HEK293 (cell line): ENCODE measurements at regions of chr17 and their contacts with region 1.

Region 1: GRCh38 chr17:52106638-52107261 is 51.8 kb downstream of the CA10 start:
- H3K4me3 ChIP-seq: no peak overlapping the region
- H3K27ac ChIP-seq: no peak overlapping the region
- H3K4me1 ChIP-seq: no peaks in the 10 kb centered on the region
- CTCF ChIP-seq: no peak

Region 2: DNA sequence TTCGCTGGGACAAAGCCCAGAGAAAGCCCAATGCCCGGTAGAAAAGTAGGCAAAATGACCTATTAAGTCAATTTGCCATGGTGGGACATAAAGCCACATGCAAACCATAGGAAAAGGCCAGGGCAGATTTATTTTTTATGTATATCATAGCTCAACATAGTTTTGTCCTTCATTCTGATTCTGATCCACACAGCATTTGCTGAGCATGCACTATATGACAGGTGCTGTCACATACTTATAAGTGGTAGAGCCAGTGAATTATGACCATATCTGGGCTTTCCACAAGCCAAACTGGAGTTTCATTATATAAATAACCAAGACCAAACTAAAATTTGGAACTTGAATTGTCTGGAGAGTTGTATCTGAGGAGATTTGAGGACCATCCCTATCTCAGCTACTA is 22.6 kb before region 1 on chr17:
- CTCF ChIA-PET with region 1: interaction called, 10 read pairs
- POLR2A ChIA-PET with region 1: no interaction called
- H3K4me3 ChIP-seq: no peak overlapping the region
- H3K27ac ChIP-seq: no peak overlapping the region
- H3K4me1 ChIP-seq: no peaks in the 10 kb centered on the region
- CTCF ChIP-seq: no peak

Region 3: DNA sequence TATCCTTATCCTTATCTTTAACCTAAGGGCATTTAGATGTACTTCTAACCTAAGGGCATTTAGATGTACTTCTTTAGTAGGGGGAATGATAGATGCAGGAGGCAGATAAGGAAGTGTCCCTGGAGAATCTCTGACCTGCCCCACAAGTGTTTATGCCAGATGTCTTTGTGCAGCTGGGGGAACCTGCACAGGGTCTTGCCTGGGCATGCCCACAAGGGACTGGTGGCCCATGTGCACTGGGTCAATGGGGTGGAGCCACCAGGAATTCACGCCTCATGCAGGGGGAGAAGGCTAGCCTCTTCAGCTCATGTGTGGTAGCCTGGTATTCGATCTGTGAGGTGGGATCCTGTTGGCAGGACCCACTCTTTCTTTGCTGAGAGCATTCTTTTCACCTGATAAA is 13.7 kb after region 1 on chr17:
- CTCF ChIA-PET with region 1: interaction called, 11 read pairs
- POLR2A ChIA-PET with region 1: no interaction called
- H3K4me3 ChIP-seq: no peak overlapping the region
- H3K27ac ChIP-seq: no peak overlapping the region
- H3K4me1 ChIP-seq: no peaks in the 10 kb centered on the region
- CTCF ChIP-seq: no peak

Region 4: DNA sequence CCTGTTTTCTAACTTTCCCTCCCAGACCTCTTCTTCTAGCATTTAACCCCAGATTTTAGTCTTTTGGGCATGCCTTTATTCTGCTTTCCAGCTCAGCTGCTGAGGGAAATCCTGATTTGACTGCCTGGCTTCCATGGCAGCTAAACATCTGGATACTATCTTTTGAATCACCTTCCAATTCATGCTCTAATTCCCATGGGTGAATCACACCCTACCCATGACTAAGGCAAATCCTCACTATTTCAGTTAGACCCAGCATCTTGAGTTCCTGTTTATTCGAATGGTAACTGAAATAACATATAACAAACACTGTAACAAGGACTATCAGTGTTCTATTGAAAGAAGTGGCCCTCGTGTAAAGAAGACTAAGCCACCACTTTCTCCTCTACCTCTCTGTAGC is 22.0 kb after region 1 on chr17:
- CTCF ChIA-PET with region 1: interaction called, 10 read pairs
- POLR2A ChIA-PET with region 1: no interaction called
- H3K4me3 ChIP-seq: no peak overlapping the region
- H3K27ac ChIP-seq: no peak overlapping the region
- H3K4me1 ChIP-seq: no peaks in the 10 kb centered on the region
- CTCF ChIP-seq: no peak

Region 5: GRCh38 chr17:52191491-52191890 is 84.7 kb after region 1 on chr17:
- CTCF ChIA-PET with region 1: no interaction called
- POLR2A ChIA-PET with region 1: no interaction called
- H3K4me3 ChIP-seq: no peak overlapping the region
- H3K27ac ChIP-seq: no peak overlapping the region
- H3K4me1 ChIP-seq: no peaks in the 10 kb centered on the region
- CTCF ChIP-seq: no peak